ENCODE measurements at regions of chr11 and their contacts with region 1.

Region 1: GRCh38 chr11:96293598-96294021 is 49.4 kb downstream of the MAML2 start:
- DNase-seq: no peak
- ATAC-seq: peak in 4 of 8 donors; percentile 39 to 64 (median 52)
- H3K4me3 ChIP-seq: peak overlapping the region in 2 of 10 donors; percentile 4 to 9
- H3K27ac ChIP-seq: peak overlapping the region in 7 of 10 donors; percentile 5 to 64 (median 51)
- H3K4me1 ChIP-seq: peaks cover 0 to 34% (median 22%) of the 10 kb centered on the region in 9 donors
- H3K27me3 ChIP-seq: no peaks in the 10 kb centered on the region
- CTCF ChIP-seq: no peak

Region 2: GRCh38 chr11:96112201-96113128 is 181.1 kb before region 1 on chr11:
- intact Hi-C with region 1: no loop called
- DNase-seq: no peak
- ATAC-seq: peak in 3 of 8 donors; percentile 20 to 35 (median 31)
- H3K4me3 ChIP-seq: peak overlapping the region in 1 of 10 donors; percentile 12
- H3K27ac ChIP-seq: peak overlapping the region in 9 of 10 donors; percentile 32 to 80 (median 63)
- H3K4me1 ChIP-seq: peaks cover 2 to 35% (median 18%) of the 10 kb centered on the region in 9 donors
- H3K27me3 ChIP-seq: no peaks in the 10 kb centered on the region
- CTCF ChIP-seq: no peak

Region 3: GRCh38 chr11:96317985-96318384 is 24.4 kb after region 1 on chr11:
- intact Hi-C with region 1: loop called in 1 of 10 experiments (anchors 1 kb)
- DNase-seq: no peak
- ATAC-seq: no peak
- H3K4me3 ChIP-seq: no peak overlapping the region
- H3K27ac ChIP-seq: peak overlapping the region in 5 of 10 donors; percentile 4 to 60 (median 7)
- H3K4me1 ChIP-seq: peaks cover 11 to 83% (median 61%) of the 10 kb centered on the region in 9 donors
- H3K27me3 ChIP-seq: no peaks in the 10 kb centered on the region
- CTCF ChIP-seq: no peak

Region 4: DNA sequence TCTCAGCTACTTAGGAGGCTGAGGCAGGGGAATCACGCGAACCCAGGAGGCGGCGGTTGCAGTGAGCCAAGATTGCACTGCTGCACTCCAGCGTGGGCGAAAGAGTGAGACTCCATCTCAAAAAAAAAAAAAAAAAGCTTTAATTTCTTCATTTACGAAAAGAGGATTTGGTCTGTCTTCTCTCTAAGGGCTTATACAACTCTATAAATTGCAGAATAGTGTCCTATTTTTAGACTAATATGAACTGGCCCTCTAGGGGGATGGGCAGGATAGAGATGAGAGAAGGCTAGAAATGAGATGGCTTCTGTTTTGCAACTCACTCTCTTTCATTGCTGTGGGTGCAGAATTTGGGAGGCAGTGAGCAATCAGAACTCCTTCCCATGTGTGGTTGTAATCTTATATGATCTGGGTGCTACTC is 38.1 kb after region 1 on chr11:
- intact Hi-C with region 1: loop called in 1 of 10 experiments (anchors 5 kb)
- DNase-seq: no peak
- ATAC-seq: peak; percentile 62 to 80 (median 72)
- H3K4me3 ChIP-seq: no peak overlapping the region
- H3K27ac ChIP-seq: peak overlapping the region in 4 of 10 donors; percentile 5 to 63 (median 25)
- H3K4me1 ChIP-seq: peaks cover 4 to 71% (median 30%) of the 10 kb centered on the region in 9 donors
- H3K27me3 ChIP-seq: no peaks in the 10 kb centered on the region
- CTCF ChIP-seq: no peak

Measured in heart right ventricle (tissue), 16 donors.